A549 (cell line): ENCODE measurements at regions of chr15 and their contacts with region 1.

Region 1: GRCh38 chr15:90860942-90861675 is 7.3 kb upstream of the FURIN start:
- DNase-seq: peak; percentile 92 to 95
- ATAC-seq: peak; percentile 76 to 86
- H3K4me3 ChIP-seq: no peak overlapping the region
- H3K27ac ChIP-seq: peak overlapping the region; percentile 59 to 80
- H3K4me1 ChIP-seq: peaks cover 56% of the 10 kb centered on the region
- CTCF ChIP-seq: no peak
- EP300 ChIP-seq: peak; percentile 88 to 89; a peak in 3 of 5 replicates
- POLR2A ChIP-seq: no peak
- RAD21 ChIP-seq: peak in 1 of 2 experiments; percentile 28; a peak in 4 of 5 replicates

Region 2: GRCh38 chr15:90845201-90845949 is 15.7 kb before region 1 on chr15:
- CTCF ChIA-PET with region 1: interaction called, 11 read pairs
- POLR2A ChIA-PET with region 1: no interaction called
- DNase-seq: peak; percentile 46 to 60
- ATAC-seq: peak; percentile 89 to 97
- H3K4me3 ChIP-seq: no peak overlapping the region
- H3K27ac ChIP-seq: peak overlapping the region; percentile 32 to 74; a peak in 4 of 6 replicates
- H3K4me1 ChIP-seq: peaks cover 12% of the 10 kb centered on the region
- CTCF ChIP-seq: no peak
- EP300 ChIP-seq: no peak
- POLR2A ChIP-seq: no peak
- RAD21 ChIP-seq: no peak